Naive thymus-derived CD4-positive, alpha-beta T cell (primary cell): ENCODE measurements at regions of chr9 and their contacts with region 1.

Region 1: GRCh38 chr9:7976167-7976755 is 176.7 kb upstream of the DMAC1 start:
- DNase-seq: peak in 8 of 9 donors; percentile 46 to 89 (median 82)
- ATAC-seq: peak; percentile 97
- H3K4me3 ChIP-seq: no peak overlapping the region
- H3K4me3 Mint-ChIP-seq: peak overlapping the region; percentile 16 to 80 (median 71)
- H3K27ac ChIP-seq: peak overlapping the region; percentile 14
- H3K27ac Mint-ChIP-seq: peak overlapping the region; percentile 76 to 97 (median 87)
- H3K4me1 ChIP-seq: peaks cover 41 to 60% of the 10 kb centered on the region in 2 donors
- H3K4me1 Mint-ChIP-seq: peaks cover 44 to 82% (median 72%) of the 10 kb centered on the region in 7 donors
- H3K27me3 ChIP-seq: no peaks in the 10 kb centered on the region
- H3K27me3 Mint-ChIP-seq: no peaks in the 10 kb centered on the region

Region 2: DNA sequence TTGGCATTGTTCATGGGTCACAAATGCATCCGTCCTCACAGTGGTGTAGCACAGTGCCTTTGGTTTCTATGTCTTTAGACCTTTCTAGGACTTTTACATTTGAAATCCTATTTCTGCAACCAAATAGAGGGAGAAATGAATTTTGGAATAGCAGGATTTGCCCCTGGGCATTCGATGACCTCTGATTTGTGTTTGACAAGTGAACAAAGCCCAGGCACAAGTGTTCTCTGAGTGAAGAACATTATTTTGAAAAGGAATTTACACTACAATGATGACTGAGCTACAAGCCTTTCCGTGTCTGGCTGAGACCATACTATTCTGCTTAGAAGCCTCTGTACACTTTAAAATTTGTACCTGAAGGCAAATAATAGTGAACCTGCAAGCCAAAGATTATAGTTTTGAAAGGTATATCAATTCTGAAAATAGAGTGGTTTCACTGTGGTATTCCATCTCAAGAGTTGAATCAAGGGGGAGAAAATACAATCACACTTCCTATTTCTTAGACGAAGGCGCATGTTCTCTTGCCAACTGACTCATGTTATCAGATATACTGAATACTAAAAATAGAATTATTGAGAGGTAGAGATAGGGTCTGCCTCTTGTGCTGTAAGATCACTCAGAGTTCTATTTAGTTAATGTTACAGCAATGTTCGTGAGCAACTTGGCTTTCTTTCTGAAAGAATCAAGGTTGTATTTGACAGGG is 920.9 kb before region 1 on chr9:
- CTCF ChIA-PET with region 1: no interaction called
- POLR2A ChIA-PET with region 1: no interaction called
- intact Hi-C with region 1: loop called in 1 of 2 experiments (anchors 10 kb)
- DNase-seq: no peak
- ATAC-seq: no peak
- H3K4me3 ChIP-seq: no peak overlapping the region
- H3K4me3 Mint-ChIP-seq: no peak overlapping the region
- H3K27ac ChIP-seq: no peak overlapping the region
- H3K27ac Mint-ChIP-seq: peak overlapping the region in 1 of 9 donors; percentile 30
- H3K4me1 ChIP-seq: no peaks in the 10 kb centered on the region
- H3K4me1 Mint-ChIP-seq: peaks cover 0 to 7% (median 5%) of the 10 kb centered on the region in 7 donors
- H3K27me3 ChIP-seq: no peaks in the 10 kb centered on the region
- H3K27me3 Mint-ChIP-seq: no peaks in the 10 kb centered on the region

Region 3: GRCh38 chr9:7756088-7756487 is 220.2 kb before region 1 on chr9:
- CTCF ChIA-PET with region 1: no interaction called
- POLR2A ChIA-PET with region 1: no interaction called
- intact Hi-C with region 1: loop called in 1 of 2 experiments (anchors 2 kb)
- DNase-seq: no peak
- ATAC-seq: peak; percentile 61
- H3K4me3 ChIP-seq: no peak overlapping the region
- H3K4me3 Mint-ChIP-seq: peak overlapping the region in 1 of 10 donors; percentile 7
- H3K27ac ChIP-seq: no peak overlapping the region
- H3K27ac Mint-ChIP-seq: peak overlapping the region in 3 of 9 donors; percentile 13 to 87 (median 16)
- H3K4me1 ChIP-seq: no peaks in the 10 kb centered on the region
- H3K4me1 Mint-ChIP-seq: peaks cover 0 to 27% (median 8%) of the 10 kb centered on the region in 7 donors
- H3K27me3 ChIP-seq: no peaks in the 10 kb centered on the region
- H3K27me3 Mint-ChIP-seq: no peaks in the 10 kb centered on the region

Region 4: GRCh38 chr9:7844242-7844641 is 132.0 kb before region 1 on chr9:
- CTCF ChIA-PET with region 1: no interaction called
- POLR2A ChIA-PET with region 1: interaction called, 3 read pairs
- intact Hi-C with region 1: loop called (anchors 2 to 5 kb)
- DNase-seq: peak in 6 of 9 donors; percentile 2 to 44 (median 24)
- ATAC-seq: peak; percentile 73
- H3K4me3 ChIP-seq: no peak overlapping the region
- H3K4me3 Mint-ChIP-seq: peak overlapping the region in 1 of 10 donors; percentile 6
- H3K27ac ChIP-seq: no peak overlapping the region
- H3K27ac Mint-ChIP-seq: no peak overlapping the region
- H3K4me1 ChIP-seq: no peaks in the 10 kb centered on the region
- H3K4me1 Mint-ChIP-seq: peaks cover 0 to 3% (median 0%) of the 10 kb centered on the region in 7 donors
- H3K27me3 ChIP-seq: no peaks in the 10 kb centered on the region
- H3K27me3 Mint-ChIP-seq: peaks cover 0 to 4% (median 0%) of the 10 kb centered on the region in 5 donors

Region 5: DNA sequence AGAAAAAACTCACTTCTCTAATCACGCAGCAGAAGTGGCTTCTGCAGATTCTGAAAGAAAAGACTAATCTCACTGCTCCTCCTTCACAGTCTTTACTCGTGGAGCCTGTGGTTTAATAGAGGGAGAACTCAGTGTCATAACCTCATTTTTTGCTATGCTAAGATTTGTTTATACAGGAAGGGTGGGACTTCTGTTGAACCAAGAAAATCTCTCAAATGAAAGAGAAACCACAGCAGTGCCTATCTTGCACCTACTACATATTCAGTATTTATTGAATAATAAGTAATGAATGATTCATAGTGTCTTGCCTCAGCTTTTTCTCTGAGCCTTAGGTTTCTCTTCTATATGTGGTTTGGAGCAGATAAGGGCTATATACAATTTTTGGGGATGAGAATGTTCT is 40.6 kb before region 1 on chr9:
- CTCF ChIA-PET with region 1: no interaction called
- POLR2A ChIA-PET with region 1: interaction called, 4 read pairs
- intact Hi-C with region 1: loop called (anchors 1 kb)
- DNase-seq: peak in 7 of 9 donors; percentile 54 to 83 (median 74)
- ATAC-seq: peak; percentile 97
- H3K4me3 ChIP-seq: peak overlapping the region; percentile 41
- H3K4me3 Mint-ChIP-seq: peak overlapping the region; percentile 63 to 85 (median 78)
- H3K27ac ChIP-seq: peak overlapping the region; percentile 58
- H3K27ac Mint-ChIP-seq: peak overlapping the region; percentile 90 to 99 (median 96)
- H3K4me1 ChIP-seq: peaks cover 19 to 29% of the 10 kb centered on the region in 2 donors
- H3K4me1 Mint-ChIP-seq: peaks cover 9 to 45% (median 35%) of the 10 kb centered on the region in 7 donors
- H3K27me3 ChIP-seq: no peaks in the 10 kb centered on the region
- H3K27me3 Mint-ChIP-seq: no peaks in the 10 kb centered on the region

Region 6: GRCh38 chr9:8011974-8012373 is 35.7 kb after region 1 on chr9:
- CTCF ChIA-PET with region 1: no interaction called
- POLR2A ChIA-PET with region 1: no interaction called
- intact Hi-C with region 1: loop called in 1 of 2 experiments (anchors 5 kb)
- DNase-seq: no peak
- ATAC-seq: no peak
- H3K4me3 ChIP-seq: no peak overlapping the region
- H3K4me3 Mint-ChIP-seq: no peak overlapping the region
- H3K27ac ChIP-seq: no peak overlapping the region
- H3K27ac Mint-ChIP-seq: no peak overlapping the region
- H3K4me1 ChIP-seq: no peaks in the 10 kb centered on the region
- H3K4me1 Mint-ChIP-seq: peaks cover 0 to 4% (median 0%) of the 10 kb centered on the region in 7 donors
- H3K27me3 ChIP-seq: no peaks in the 10 kb centered on the region
- H3K27me3 Mint-ChIP-seq: no peaks in the 10 kb centered on the region

Region 7: DNA sequence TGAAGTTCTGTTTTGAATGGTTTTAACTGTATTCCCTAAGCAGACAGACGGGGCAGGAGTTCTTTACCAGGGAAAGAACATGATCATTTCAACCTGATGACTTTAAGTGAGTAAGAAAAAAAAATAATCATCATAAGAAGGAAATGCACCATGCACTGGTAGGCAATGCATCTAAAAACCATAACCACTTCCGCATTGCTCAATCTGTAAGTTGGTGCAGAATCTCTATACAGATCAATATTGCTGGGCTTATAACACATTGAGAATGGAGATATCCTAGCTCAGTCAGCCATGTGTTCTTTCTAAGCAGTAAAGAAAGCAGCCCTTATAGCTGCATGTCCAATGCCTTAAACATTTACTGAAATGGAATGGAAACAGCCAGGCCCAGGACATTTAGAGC is 230.5 kb after region 1 on chr9:
- CTCF ChIA-PET with region 1: no interaction called
- POLR2A ChIA-PET with region 1: no interaction called
- intact Hi-C with region 1: no loop called
- DNase-seq: peak in 4 of 9 donors; percentile 4 to 9 (median 6)
- ATAC-seq: peak; percentile 40
- H3K4me3 ChIP-seq: no peak overlapping the region
- H3K4me3 Mint-ChIP-seq: peak overlapping the region in 5 of 10 donors; percentile 11 to 32 (median 15)
- H3K27ac ChIP-seq: no peak overlapping the region
- H3K27ac Mint-ChIP-seq: peak overlapping the region in 1 of 9 donors; percentile 40
- H3K4me1 ChIP-seq: peaks cover 0 to 4% of the 10 kb centered on the region in 2 donors
- H3K4me1 Mint-ChIP-seq: peaks cover 0 to 14% (median 3%) of the 10 kb centered on the region in 7 donors
- H3K27me3 ChIP-seq: peaks cover 0 to 3% of the 10 kb centered on the region in 2 donors
- H3K27me3 Mint-ChIP-seq: no peaks in the 10 kb centered on the region

Region 8: DNA sequence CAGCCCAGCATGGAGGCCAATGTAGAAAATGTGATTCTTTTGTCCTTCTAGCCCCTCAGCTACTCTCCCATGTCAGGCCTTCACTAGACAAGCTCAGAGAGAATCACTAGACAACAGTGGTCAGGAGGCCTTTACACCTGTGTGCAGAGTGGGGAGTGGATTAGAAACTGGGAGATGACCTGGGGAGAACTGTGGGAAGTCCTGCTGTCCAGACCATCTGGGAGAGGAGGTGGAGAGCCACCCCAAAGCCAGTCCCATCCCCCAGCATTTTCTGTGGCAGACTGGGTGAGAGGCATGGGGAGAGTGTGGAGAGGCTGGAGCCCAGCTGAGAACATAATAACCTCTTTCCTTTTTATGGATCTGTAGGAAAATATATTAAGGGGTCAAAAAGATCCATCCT is 275.3 kb after region 1 on chr9:
- CTCF ChIA-PET with region 1: no interaction called
- POLR2A ChIA-PET with region 1: no interaction called
- intact Hi-C with region 1: no loop called
- DNase-seq: no peak
- ATAC-seq: no peak
- H3K4me3 ChIP-seq: no peak overlapping the region
- H3K4me3 Mint-ChIP-seq: no peak overlapping the region
- H3K27ac ChIP-seq: no peak overlapping the region
- H3K27ac Mint-ChIP-seq: no peak overlapping the region
- H3K4me1 ChIP-seq: no peaks in the 10 kb centered on the region
- H3K4me1 Mint-ChIP-seq: no peaks in the 10 kb centered on the region
- H3K27me3 ChIP-seq: no peaks in the 10 kb centered on the region
- H3K27me3 Mint-ChIP-seq: peaks cover 0 to 25% (median 4%) of the 10 kb centered on the region in 5 donors